Sigmoid colon (tissue), 7 donors: ENCODE measurements at regions of chr1 and their contacts with region 1.

Region 1: GRCh38 chr1:56175211-56175610 is 404.2 kb downstream of the PLPP3 start:
- DNase-seq: no peak
- H3K4me3 ChIP-seq: no peak overlapping the region
- H3K27ac ChIP-seq: no peak overlapping the region
- H3K4me1 ChIP-seq: peaks cover 0 to 5% (median 1%) of the 10 kb centered on the region in 4 donors
- H3K27me3 ChIP-seq: no peaks in the 10 kb centered on the region
- CTCF ChIP-seq: no peak
- EP300 ChIP-seq: no peak
- POLR2A ChIP-seq: no peak

Region 2: GRCh38 chr1:56153276-56153675 is 21.9 kb before region 1 on chr1:
- intact Hi-C with region 1: loop called (anchors 1 kb)
- DNase-seq: no peak
- H3K4me3 ChIP-seq: no peak overlapping the region
- H3K27ac ChIP-seq: no peak overlapping the region
- H3K4me1 ChIP-seq: no peaks in the 10 kb centered on the region
- H3K27me3 ChIP-seq: no peaks in the 10 kb centered on the region
- CTCF ChIP-seq: no peak
- EP300 ChIP-seq: no peak
- POLR2A ChIP-seq: no peak